ENCODE measurements at regions of chr5 and their contacts with region 1.

Region 1: GRCh38 chr5:172770675-172771438 is at the start of gene DUSP1:
- DNase-seq: peak; percentile 96 to 100 (median 98)
- ATAC-seq: peak; percentile 45
- H3K4me3 ChIP-seq: peak within 1 kb of the TSS; percentile 95
- H3K4me3 Mint-ChIP-seq: peak within 1 kb of the TSS; percentile 99
- H3K27ac ChIP-seq: peak within 1 kb of the TSS; percentile 100
- H3K27ac Mint-ChIP-seq: peak within 1 kb of the TSS; percentile 95
- H3K4me1 ChIP-seq: peaks cover 87% of the 10 kb centered on the region
- H3K4me1 Mint-ChIP-seq: peaks cover 78% of the 10 kb centered on the region
- H3K27me3 ChIP-seq: no peaks in the 10 kb centered on the region
- H3K27me3 Mint-ChIP-seq: peaks cover 6% of the 10 kb centered on the region
- CTCF ChIP-seq: peak; percentile 33
- total RNA-seq, gene DUSP1: 761 to 768 TPM

Region 2: GRCh38 chr5:172806897-172807672 is 36.2 kb after region 1 on chr5:
- CTCF ChIA-PET with region 1: interaction called, 5 read pairs
- POLR2A ChIA-PET with region 1: interaction called, 41 read pairs
- intact Hi-C with region 1: loop called (anchors 5 kb)
- DNase-seq: peak; percentile 56 to 96 (median 74)
- ATAC-seq: peak; percentile 96
- H3K4me3 ChIP-seq: peak overlapping the region; percentile 42
- H3K4me3 Mint-ChIP-seq: peak overlapping the region; percentile 76
- H3K27ac ChIP-seq: peak overlapping the region in 1 of 2 donors; percentile 43
- H3K27ac Mint-ChIP-seq: peak overlapping the region; percentile 84
- H3K4me1 ChIP-seq: peaks cover 14% of the 10 kb centered on the region
- H3K4me1 Mint-ChIP-seq: peaks cover 12% of the 10 kb centered on the region
- H3K27me3 ChIP-seq: no peaks in the 10 kb centered on the region
- H3K27me3 Mint-ChIP-seq: no peaks in the 10 kb centered on the region
- CTCF ChIP-seq: no peak

Region 3: DNA sequence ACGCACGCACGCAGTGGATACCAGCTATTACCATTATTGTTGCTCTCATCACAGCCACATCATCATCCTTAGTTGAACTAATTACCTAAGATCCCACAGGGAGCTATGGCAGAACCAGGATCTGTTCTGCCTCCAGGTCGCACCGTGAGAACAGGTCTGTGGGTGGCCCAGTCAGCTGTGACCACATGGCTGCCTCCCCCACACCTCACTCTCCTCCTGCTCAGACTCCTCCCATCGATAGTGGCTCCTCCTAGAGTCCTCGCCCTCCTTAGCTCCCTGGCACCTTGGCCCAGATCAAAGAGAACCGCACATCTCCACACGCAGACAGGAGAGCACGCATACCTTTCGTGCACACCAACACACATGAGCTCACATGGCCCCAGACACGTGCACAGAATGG is 155.9 kb after region 1 on chr5:
- CTCF ChIA-PET with region 1: interaction called, 18 read pairs
- POLR2A ChIA-PET with region 1: interaction called, 27 read pairs
- intact Hi-C with region 1: loop called in 1 of 2 experiments (anchors 5 kb)
- DNase-seq: no peak
- ATAC-seq: no peak
- H3K4me3 ChIP-seq: no peak overlapping the region
- H3K4me3 Mint-ChIP-seq: no peak overlapping the region
- H3K27ac ChIP-seq: no peak overlapping the region
- H3K27ac Mint-ChIP-seq: no peak overlapping the region
- H3K4me1 ChIP-seq: no peaks in the 10 kb centered on the region
- H3K4me1 Mint-ChIP-seq: no peaks in the 10 kb centered on the region
- H3K27me3 ChIP-seq: no peaks in the 10 kb centered on the region
- H3K27me3 Mint-ChIP-seq: no peaks in the 10 kb centered on the region
- CTCF ChIP-seq: no peak

Region 4: DNA sequence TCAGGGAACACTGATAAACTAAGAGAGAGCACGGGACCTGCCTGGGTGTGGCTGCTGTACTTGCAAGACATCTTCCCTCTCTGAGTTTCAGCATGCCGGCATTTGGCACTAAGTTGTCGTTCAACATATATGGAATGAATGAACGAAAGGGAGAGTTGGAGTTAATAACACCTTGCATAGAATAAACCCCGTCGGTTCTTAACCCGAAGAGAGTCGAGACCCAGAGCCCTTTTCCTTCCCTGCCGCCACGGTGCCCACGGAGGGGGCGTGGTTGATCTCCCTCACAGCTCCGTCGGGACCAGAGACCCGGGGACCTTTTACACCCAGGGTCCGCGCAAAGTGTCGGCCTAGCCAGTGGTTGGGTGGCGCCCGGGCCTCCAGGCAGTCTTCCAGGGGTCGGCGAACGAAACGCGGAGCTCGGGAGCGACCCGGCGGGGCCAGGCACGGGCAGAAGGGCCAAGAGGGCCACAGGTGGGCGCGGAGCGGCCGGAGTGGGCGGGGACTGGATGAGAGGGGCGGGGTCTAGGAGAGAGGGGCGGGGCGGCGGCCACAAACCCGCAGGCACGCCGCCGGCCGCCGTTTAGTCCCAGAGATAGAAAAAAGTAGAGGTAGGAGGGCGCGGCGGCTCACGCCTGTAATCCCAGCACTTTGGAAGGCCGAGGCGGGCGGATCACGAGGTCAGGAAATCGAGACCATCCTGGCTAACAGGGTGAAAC is 187.6 kb after region 1 on chr5:
- CTCF ChIA-PET with region 1: interaction called, 8 read pairs
- POLR2A ChIA-PET with region 1: interaction called, 28 read pairs
- intact Hi-C with region 1: loop called in 1 of 2 experiments (anchors 2 kb)
- DNase-seq: peak; percentile 35 to 83 (median 56)
- ATAC-seq: peak; percentile 49
- H3K4me3 ChIP-seq: peak overlapping the region; percentile 93
- H3K4me3 Mint-ChIP-seq: peak overlapping the region; percentile 97
- H3K27ac ChIP-seq: peak overlapping the region; percentile 59 to 76
- H3K27ac Mint-ChIP-seq: peak overlapping the region; percentile 96
- H3K4me1 ChIP-seq: peaks cover 21% of the 10 kb centered on the region
- H3K4me1 Mint-ChIP-seq: peaks cover 44% of the 10 kb centered on the region
- H3K27me3 ChIP-seq: no peaks in the 10 kb centered on the region
- H3K27me3 Mint-ChIP-seq: no peaks in the 10 kb centered on the region
- CTCF ChIP-seq: no peak

Region 5: GRCh38 chr5:173065155-173065554 is 294.3 kb after region 1 on chr5:
- CTCF ChIA-PET with region 1: no interaction called
- POLR2A ChIA-PET with region 1: no interaction called
- intact Hi-C with region 1: no loop called
- DNase-seq: peak in 2 of 14 experiments; percentile 17 to 32
- ATAC-seq: peak; percentile 70
- H3K4me3 ChIP-seq: no peak overlapping the region
- H3K4me3 Mint-ChIP-seq: peak overlapping the region; percentile 40
- H3K27ac ChIP-seq: peak overlapping the region in 1 of 2 donors; percentile 2
- H3K27ac Mint-ChIP-seq: peak overlapping the region; percentile 70
- H3K4me1 ChIP-seq: peaks cover 44% of the 10 kb centered on the region
- H3K4me1 Mint-ChIP-seq: peaks cover 85% of the 10 kb centered on the region
- H3K27me3 ChIP-seq: no peaks in the 10 kb centered on the region
- H3K27me3 Mint-ChIP-seq: no peaks in the 10 kb centered on the region
- CTCF ChIP-seq: no peak

Region 6: DNA sequence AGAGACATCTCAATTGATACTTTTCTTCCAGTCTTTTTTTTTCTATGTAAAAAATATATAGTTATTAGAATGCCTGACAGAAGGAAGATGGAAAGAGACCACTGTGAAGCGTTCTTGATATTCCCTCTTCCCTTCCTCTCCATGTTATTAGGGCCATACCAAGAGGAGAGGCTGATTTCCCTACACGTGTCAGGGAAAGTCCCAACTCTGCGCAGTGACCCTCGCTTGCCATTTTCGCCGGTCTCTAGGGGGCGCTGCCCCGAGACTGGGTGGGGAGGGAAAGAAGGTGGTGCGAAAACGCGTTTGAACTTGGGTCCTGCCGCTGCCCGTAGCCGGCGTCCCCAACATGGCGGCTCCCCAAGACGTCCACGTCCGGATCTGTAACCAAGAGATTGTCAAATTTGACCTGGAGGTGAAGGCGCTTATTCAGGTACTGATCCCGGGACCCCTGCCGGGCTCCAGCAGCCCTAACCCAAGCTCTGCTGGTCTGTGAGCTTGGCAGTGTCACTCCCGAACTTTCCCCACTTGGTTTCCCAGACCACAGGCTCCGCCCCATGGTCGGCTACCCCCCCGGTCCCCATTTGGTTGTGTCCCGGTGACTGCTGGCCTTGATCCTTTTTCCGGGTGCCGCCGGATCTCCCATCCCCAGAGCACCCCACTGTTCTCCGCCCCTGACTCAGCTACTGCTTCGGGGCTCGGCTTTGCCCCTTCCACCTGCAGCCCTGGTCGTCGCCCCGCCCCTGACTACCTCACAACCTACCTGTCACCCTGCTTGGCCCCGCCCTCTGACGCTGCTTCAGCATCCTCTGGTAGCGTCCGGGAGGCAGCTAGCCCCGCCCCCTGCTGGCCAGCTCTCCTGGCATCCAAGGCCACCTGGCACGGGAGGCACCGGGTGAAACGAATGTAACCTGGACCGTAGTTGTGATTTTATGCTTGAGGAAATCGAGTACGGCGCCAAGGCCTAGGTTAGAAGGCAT is 373.6 kb after region 1 on chr5 and contains the start of gene BNIP1:
- CTCF ChIA-PET with region 1: no interaction called
- POLR2A ChIA-PET with region 1: interaction called, 4 read pairs
- intact Hi-C with region 1: loop called in 1 of 2 experiments (anchors 5 kb)
- DNase-seq: peak; percentile 90 to 99 (median 97)
- ATAC-seq: peak; percentile 93
- H3K4me3 ChIP-seq: peak within 1 kb of the TSS; percentile 90
- H3K4me3 Mint-ChIP-seq: peak within 1 kb of the TSS; percentile 98
- H3K27ac ChIP-seq: peak within 1 kb of the TSS; percentile 97 to 99
- H3K27ac Mint-ChIP-seq: peak within 1 kb of the TSS; percentile 100
- H3K4me1 ChIP-seq: peaks cover 8% of the 10 kb centered on the region
- H3K4me1 Mint-ChIP-seq: peaks cover 13% of the 10 kb centered on the region
- H3K27me3 ChIP-seq: no peaks in the 10 kb centered on the region
- H3K27me3 Mint-ChIP-seq: no peaks in the 10 kb centered on the region
- CTCF ChIP-seq: peak; percentile 90
- total RNA-seq, gene BNIP1: 22.5 to 24.4 TPM